Activated naive CD4-positive, alpha-beta T cell treated with anti-CD3 and anti-CD28 coated beads for 36 hours (primary cell): ENCODE measurements at regions of chr4 and their contacts with region 1.

Region 1: GRCh38 chr4:143202824-143203223 is 18.1 kb downstream of the USP38 start:
- DNase-seq: no peak
- H3K4me3 Mint-ChIP-seq: no peak overlapping the region
- H3K27ac Mint-ChIP-seq: no peak overlapping the region
- H3K4me1 Mint-ChIP-seq: peaks cover 8% of the 10 kb centered on the region
- H3K27me3 Mint-ChIP-seq: no peaks in the 10 kb centered on the region

Region 2: DNA sequence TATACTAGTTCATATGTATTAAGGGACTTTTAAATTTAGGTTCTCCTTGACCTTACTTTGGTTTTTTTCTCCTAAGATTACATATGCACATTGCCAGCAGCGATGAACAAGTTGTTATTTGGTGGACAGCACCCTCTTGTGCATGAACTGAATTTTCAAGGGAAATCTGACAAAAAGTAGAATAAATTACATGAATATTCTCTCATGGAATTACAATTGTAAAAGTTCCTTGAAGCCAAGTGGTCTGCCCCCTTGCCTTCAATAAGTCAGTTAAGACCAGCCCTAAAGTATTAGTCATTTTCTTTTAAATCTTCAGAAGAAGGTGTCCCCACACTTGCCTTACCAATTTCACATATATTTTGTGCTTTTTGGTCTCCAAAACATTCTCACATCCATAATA is 280.0 kb after region 1 on chr4:
- CTCF ChIA-PET with region 1: no interaction called
- intact Hi-C with region 1: loop called (anchors 2 kb)
- DNase-seq: peak; percentile 28
- H3K4me3 Mint-ChIP-seq: no peak overlapping the region
- H3K27ac Mint-ChIP-seq: no peak overlapping the region
- H3K4me1 Mint-ChIP-seq: no peaks in the 10 kb centered on the region
- H3K27me3 Mint-ChIP-seq: peaks cover 4% of the 10 kb centered on the region